Astrocyte of the spinal cord (primary cell): ENCODE measurements at regions of chr7 and their contacts with region 1.

Region 1: DNA sequence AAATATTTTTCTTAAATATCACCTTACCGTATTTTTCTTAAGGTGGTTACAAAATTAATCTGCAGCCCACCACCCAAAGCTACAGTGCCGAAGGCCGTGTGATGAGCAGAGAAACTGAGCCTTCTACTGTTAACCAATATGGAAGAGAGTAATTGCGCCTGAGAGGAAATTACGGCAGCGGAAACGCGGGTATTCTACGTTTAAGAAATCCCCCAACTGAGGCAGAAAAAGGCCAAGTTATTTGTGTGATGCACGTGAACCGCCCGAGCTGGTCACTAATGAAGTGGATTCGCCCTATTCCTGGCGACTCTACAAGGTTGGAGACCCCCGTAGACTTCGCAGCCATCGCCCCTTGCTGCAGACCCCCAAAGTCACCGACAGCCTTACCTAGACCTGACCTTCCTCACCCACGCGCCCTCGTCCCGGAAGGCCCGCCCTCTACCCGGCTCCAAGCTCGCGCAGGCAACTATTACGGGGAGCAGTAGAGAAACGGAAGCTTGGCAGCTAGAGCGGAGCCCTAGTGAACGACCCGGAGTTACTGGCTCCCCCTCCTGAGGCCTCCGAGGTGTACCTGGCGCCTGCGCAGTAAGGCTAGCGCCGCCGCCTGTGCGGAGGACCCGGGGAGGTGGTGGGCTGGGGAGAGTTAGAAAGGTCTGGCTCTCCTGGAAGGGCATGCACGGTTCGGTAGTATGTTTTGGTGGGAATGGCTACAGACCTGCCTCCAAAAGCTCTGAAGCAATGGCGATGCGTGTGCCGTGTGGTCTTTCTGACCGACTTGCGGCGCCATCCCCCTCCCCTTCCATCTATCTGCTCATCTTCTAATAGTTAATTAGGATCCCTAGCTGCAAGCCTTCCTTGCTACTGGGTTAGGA is at the start of gene MRPS33:
- DNase-seq: peak; percentile 96
- H3K4me3 ChIP-seq: peak within 1 kb of the TSS; percentile 66
- CTCF ChIP-seq: peak; percentile 71

Region 2: DNA sequence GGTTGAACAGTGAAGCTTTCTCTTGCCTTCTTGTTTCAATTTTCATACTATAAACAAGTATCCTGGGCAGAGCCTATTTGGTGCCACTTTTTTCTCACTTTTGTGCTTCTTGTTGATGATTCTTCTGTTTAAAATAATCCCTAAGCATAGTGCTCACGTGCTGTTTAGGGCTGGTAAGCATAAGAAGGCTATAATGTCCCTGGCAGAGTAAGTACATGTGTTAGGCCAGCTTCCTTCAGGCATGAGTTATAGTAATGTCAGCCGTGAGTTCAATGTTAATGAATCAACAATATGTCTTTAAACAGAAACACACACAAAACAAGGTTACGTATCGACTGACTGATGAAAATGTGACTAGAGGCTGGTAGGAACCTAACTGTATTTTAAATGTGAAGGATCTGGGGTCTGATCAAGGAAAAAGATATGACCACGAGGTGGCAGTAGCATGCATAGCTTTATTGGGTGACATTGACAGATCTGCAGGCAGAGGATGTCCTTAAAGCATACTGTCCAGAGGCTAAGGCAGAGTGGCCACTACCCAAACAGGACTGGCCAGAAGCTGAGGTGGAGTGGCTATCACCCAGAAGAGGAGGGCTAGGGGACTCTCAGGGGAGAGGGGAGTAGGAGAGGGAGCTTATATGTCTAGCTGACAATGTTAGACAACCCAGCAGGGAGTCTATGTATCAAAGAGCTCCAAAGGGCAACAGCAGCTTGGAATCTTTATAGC is 203.8 kb before region 1 on chr7:
- in situ Hi-C with region 1: loop called (anchors 25 kb)
- DNase-seq: peak; percentile 67
- H3K4me3 ChIP-seq: no peak overlapping the region
- CTCF ChIP-seq: peak; percentile 66